Left colon (tissue), 2 donors: ENCODE measurements at regions of chr1 and their contacts with region 1.

Region 1: GRCh38 chr1:192477630-192478029 is 97.9 kb upstream of the RGS1 start:
- DNase-seq: no peak
- ATAC-seq: no peak

Region 2: DNA sequence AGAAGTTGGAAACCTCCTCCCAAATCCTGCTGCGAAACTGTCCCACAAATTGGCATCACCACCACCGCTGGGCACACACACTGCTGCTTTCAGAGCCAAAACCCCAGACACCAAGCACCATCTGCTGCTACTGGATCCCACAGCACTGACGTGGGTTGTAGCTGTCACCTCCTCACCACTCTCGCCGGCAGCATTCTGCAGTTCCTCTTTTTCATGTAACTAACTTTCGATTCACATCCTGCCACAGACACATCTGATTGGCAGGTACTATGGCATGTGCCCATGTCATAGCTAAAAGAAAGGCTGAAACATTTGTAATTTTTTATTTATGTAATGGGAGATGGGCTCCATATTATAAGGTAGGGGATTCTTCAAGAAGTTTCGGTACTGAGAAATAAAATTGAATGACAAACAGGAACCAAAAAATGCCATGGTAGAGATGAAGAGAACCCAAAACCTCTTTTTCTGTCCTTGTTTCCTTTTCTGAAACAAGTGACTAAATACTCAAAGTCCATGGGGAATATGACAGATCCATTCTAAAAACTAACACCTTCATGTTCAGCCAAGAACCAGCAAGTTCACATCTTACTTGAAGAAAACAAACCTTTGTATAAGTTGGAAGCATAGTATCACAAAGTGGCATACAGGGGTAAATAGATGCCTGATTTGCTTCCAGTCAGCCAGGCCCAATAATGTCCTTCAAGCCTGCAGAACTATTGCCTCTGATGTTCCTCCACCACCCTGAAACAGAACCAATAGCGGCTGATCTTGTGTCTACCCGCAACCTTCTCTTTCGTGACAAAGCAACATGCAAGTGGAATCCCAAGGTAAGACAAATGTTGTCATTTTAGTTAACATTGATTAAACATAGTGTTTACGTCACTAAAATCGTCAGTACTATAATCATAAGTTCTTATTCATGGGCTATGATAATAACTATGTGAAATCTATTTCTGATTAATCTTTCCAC is 131.8 kb after region 1 on chr1:
- intact Hi-C with region 1: loop called (anchors 5 to 10 kb)
- DNase-seq: peak; percentile 59 to 76
- ATAC-seq: peak; percentile 26

Region 3: GRCh38 chr1:192793983-192794767 is 316.5 kb after region 1 on chr1:
- intact Hi-C with region 1: loop called in 1 of 2 experiments (anchors 10 kb)
- DNase-seq: no peak
- ATAC-seq: no peak

Region 4: DNA sequence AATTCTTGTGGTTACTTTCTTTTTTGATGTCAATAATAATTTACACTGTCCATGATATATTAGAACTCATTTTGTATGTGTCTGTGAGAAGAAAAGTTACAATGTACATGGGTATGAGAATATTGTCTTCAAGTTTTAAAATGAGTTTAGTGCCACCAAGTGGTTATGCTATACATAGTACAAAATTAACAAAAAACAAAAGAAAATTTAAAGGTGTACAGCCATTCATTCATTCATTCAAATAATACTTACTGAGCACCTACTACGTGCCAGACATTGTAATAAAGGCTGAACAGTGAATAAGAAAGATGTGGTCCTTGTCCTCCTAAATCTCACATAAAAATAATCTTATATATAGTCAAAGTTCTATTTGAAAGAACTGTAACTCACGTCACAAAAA is 553.8 kb after region 1 on chr1:
- intact Hi-C with region 1: loop called in 1 of 2 experiments (anchors 10 kb)
- DNase-seq: no peak
- ATAC-seq: peak; percentile 51